MCF 10A (cell line): ENCODE measurements at regions of chr20 and their contacts with region 1.

Region 1: GRCh38 chr20:17898548-17898994 is 70.0 kb downstream of the SNX5 start:
- DNase-seq: peak; percentile 78
- H3K4me3 Mint-ChIP-seq: no peak overlapping the region
- H3K27ac Mint-ChIP-seq: no peak overlapping the region
- H3K4me1 Mint-ChIP-seq: peaks cover 21% of the 10 kb centered on the region
- H3K27me3 Mint-ChIP-seq: no peaks in the 10 kb centered on the region
- CTCF ChIP-seq: peak; percentile 91

Region 2: GRCh38 chr20:17648791-17649730 is 249.5 kb before region 1 on chr20:
- CTCF ChIA-PET with region 1: interaction called, 16 read pairs
- POLR2A ChIA-PET with region 1: interaction called, 5 read pairs
- intact Hi-C with region 1: no loop called
- DNase-seq: no peak
- H3K4me3 Mint-ChIP-seq: no peak overlapping the region
- H3K27ac Mint-ChIP-seq: no peak overlapping the region
- H3K4me1 Mint-ChIP-seq: no peaks in the 10 kb centered on the region
- H3K27me3 Mint-ChIP-seq: no peaks in the 10 kb centered on the region
- CTCF ChIP-seq: peak; percentile 26

Region 3: DNA sequence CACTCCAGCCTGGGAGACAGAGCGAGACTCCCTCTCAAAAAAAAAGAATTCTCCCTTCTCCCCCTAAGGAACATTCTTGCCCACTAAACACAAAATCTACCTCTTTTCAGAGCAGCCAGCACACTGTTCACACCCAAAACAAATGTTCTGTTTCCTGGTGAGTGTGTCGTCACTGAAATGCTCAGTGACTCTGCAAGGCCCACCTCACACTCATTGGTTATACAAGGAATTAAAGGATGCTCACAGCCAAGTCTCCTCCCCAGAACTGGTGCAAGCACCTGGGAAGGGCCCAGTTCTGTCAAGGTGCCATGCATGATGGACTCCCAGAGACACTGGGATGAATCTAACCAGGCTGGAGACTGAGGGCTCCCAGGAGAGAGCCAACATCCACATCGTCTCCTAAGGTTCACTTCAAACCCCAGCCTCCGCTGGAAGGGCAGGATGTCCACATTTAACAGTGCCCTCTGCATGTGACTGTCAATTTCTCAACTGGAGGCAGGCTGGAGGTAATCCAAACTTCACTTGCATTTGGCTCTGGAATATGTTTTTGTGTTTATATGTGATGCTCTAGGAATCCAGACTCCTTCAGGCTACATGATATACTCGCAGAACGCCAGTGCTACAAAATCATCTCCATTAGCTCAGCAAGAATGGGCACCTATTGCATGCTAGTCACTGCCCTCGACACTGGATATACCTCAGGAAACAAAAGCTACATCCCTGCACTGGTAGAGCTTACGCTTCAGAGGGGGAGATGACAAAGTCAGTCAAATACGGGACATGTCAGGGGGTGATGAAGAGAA is 223.6 kb before region 1 on chr20:
- CTCF ChIA-PET with region 1: interaction called, 156 read pairs
- POLR2A ChIA-PET with region 1: interaction called, 46 read pairs
- intact Hi-C with region 1: no loop called
- DNase-seq: no peak
- H3K4me3 Mint-ChIP-seq: no peak overlapping the region
- H3K27ac Mint-ChIP-seq: peak overlapping the region; percentile 50
- H3K4me1 Mint-ChIP-seq: peaks cover 35% of the 10 kb centered on the region
- H3K27me3 Mint-ChIP-seq: no peaks in the 10 kb centered on the region
- CTCF ChIP-seq: no peak

Region 4: DNA sequence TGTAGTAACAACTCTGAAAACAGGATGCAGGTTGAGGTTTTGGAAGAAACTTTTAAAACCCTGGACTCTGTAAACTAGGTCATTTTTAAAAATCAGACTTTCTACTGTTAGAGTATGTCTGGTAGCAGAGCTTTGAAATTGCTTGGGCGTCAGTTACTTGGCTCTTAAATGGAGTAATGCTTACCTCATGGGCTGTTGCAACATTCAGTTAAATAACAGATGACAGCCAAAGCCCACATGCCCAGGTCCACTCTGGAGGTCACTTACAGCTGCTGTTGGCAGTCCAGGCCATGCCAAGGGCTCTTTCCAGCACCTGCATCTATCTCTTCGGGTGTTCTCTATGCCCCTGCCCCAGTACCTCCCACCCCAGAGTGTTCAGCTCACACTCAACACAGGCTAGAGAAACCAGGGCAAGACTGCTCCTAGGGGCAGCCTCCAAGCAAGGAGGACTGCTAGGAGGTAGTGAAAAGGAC is 102.4 kb before region 1 on chr20:
- CTCF ChIA-PET with region 1: interaction called, 10 read pairs
- POLR2A ChIA-PET with region 1: no interaction called
- intact Hi-C with region 1: no loop called
- DNase-seq: peak; percentile 43
- H3K4me3 Mint-ChIP-seq: no peak overlapping the region
- H3K27ac Mint-ChIP-seq: no peak overlapping the region
- H3K4me1 Mint-ChIP-seq: peaks cover 5% of the 10 kb centered on the region
- H3K27me3 Mint-ChIP-seq: no peaks in the 10 kb centered on the region
- CTCF ChIP-seq: no peak

Region 5: DNA sequence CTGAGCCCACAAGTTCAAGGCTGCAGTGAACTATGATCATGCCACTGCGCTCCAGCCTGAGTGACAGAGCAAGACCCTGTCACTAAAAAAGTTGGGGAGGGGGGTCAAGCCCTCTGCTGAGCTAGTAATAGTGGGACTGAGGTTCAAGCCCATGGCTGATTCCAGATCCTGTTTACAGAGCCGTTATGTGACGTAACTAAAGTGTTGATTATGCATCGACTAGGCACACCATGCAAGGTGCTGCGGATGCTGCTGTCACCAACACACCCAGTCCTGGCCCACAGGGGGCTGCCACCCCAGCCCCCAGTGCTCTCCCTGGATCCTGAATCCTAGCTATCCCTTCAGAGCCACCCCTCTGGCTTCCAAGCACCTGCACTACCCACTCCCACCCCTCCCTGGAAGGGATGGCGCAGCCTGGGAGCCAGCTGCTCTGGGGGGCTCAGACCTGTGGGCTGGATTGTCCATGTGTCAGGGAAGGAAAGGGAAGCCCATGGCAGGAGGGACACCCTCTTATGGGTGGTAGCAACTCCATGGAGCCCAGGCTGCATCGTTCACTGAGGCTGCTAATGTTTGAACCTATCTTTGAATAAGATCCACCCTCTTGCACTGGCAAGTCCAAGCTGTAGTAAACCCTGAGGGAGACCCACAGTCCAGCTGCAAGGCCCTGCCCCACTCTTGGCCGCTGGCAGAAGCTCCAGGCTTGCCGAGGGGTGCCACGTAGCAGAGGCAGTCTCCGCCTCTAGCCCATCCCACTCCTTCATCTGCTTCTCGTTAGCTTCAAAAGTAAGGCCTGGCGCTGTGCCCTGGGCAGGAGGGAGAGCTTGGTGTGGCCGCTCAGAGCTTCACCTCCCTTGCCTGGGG is 24.9 kb before region 1 on chr20:
- CTCF ChIA-PET with region 1: interaction called, 24 read pairs
- POLR2A ChIA-PET with region 1: interaction called, 3 read pairs
- intact Hi-C with region 1: no loop called
- DNase-seq: peak; percentile 91
- H3K4me3 Mint-ChIP-seq: peak overlapping the region; percentile 46
- H3K27ac Mint-ChIP-seq: peak overlapping the region; percentile 29
- H3K4me1 Mint-ChIP-seq: peaks cover 24% of the 10 kb centered on the region
- H3K27me3 Mint-ChIP-seq: no peaks in the 10 kb centered on the region
- CTCF ChIP-seq: no peak

Region 6: DNA sequence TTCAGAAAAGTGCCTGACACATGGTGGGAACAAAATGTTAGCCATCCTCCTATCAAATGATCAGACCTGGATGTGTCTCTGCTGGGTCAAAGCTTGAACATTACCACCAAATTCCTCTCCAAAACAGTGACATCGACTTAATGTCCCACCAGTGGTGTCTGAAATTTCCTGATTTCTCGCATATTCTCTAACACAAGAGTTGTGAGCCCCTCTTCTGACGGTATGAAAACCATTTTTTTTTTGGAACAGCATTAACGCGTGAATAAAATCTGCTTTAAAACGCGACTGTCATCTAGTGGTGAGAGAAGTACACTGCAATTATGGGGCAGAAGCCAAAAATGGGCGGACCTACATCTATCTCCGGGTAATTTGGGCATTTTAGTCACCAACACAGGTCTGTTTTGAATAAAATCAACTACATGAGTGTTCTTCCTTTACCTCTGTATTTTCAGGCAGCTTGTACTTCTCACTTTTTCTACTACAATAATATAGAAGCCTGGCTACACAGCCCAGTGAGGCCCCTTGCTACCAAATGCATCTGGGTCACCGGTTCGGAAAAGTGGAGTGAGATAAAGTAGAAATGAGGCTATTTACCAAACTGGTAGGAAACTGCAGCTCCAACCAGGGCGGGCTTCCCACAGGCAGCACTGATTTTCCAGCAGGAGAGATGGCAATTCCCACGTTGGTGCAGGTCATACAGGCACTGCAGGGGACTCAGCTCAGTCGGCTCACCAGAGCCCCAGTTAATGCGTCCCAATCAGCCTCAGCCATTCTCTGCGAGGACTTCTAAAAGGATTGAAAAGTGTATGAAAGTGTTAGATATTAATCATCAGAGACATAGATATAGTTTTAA is 97.6 kb after region 1 on chr20:
- CTCF ChIA-PET with region 1: interaction called, 6 read pairs
- POLR2A ChIA-PET with region 1: no interaction called
- intact Hi-C with region 1: loop called (anchors 1 kb)
- DNase-seq: peak; percentile 75
- H3K4me3 Mint-ChIP-seq: no peak overlapping the region
- H3K27ac Mint-ChIP-seq: no peak overlapping the region
- H3K4me1 Mint-ChIP-seq: peaks cover 14% of the 10 kb centered on the region
- H3K27me3 Mint-ChIP-seq: no peaks in the 10 kb centered on the region
- CTCF ChIP-seq: peak; percentile 89

Region 7: GRCh38 chr20:18079756-18080353 is 181.3 kb after region 1 on chr20:
- CTCF ChIA-PET with region 1: no interaction called
- POLR2A ChIA-PET with region 1: no interaction called
- intact Hi-C with region 1: no loop called
- DNase-seq: no peak
- H3K4me3 Mint-ChIP-seq: no peak overlapping the region
- H3K27ac Mint-ChIP-seq: no peak overlapping the region
- H3K4me1 Mint-ChIP-seq: no peaks in the 10 kb centered on the region
- H3K27me3 Mint-ChIP-seq: no peaks in the 10 kb centered on the region
- CTCF ChIP-seq: no peak